Gastrocnemius medialis (tissue), 4 donors: ENCODE measurements at regions of chrX and their contacts with region 1.

Region 1: DNA sequence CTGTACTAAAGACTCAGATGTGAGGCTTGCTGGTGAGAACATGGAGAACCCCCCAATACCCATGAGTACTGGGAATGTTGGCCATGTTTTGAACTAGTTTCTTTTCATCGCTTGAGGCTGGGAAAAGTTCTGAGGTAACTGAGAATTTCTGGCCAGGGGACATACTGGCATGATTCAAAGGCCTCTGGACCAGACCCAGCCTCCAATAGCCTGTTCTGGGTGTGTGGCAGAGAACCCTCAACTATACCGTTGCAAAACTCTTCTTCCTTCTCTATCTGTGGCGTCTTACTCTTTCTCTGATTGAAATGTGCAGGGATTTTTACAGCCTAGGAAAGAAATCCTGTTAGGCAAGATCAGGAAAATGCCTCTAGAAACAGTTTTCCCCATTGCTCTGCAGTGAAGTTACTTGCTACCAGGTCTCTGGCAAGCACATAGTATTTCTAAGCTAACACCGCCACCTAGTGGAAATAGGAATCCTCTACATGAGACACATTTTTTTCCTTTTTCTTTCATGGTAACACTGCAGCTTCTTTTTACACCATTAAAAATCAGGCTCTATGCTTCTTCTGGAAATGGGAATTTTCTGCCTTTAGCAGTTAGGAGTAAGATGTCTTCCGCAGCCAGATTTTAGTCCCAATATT is 170.7 kb upstream of the ZCCHC13 start:
- DNase-seq: no peak
- ATAC-seq: peak; percentile 72 to 77
- H3K4me3 ChIP-seq: no peak overlapping the region
- H3K27ac ChIP-seq: no peak overlapping the region
- H3K4me1 ChIP-seq: no peaks in the 10 kb centered on the region
- H3K27me3 ChIP-seq: no peaks in the 10 kb centered on the region
- CTCF ChIP-seq: peak; percentile 56 to 83 (median 70)
- POLR2A ChIP-seq: no peak

Region 2: DNA sequence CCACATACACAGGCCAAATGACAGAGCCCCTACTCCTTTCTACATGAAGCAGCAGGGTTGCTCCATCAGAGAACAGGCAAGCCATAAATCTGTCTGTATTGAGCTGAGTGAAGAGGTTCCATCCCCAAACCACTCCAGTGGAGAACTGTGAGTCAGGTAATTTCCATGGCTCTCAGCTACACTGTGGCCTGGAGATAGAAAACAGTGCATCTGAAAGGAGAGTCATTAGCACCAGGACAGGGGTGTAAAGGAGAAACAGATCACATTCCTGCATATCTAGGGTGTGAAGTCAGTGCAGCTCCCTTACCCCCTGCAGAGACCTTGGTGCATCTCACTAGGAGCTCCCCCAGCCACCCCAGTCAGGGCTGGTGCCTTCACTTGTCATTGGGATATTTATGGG is 255.6 kb before region 1 on chrX:
- in situ Hi-C with region 1: loop called in 2 of 4 experiments (anchors 10 to 25 kb)
- intact Hi-C with region 1: no loop called
- DNase-seq: no peak
- ATAC-seq: no peak
- H3K4me3 ChIP-seq: no peak overlapping the region
- H3K27ac ChIP-seq: no peak overlapping the region
- H3K4me1 ChIP-seq: no peaks in the 10 kb centered on the region
- H3K27me3 ChIP-seq: no peaks in the 10 kb centered on the region
- CTCF ChIP-seq: no peak
- POLR2A ChIP-seq: no peak

Region 3: GRCh38 chrX:74343343-74344279 is 210.3 kb after region 1 on chrX:
- in situ Hi-C with region 1: no loop called
- intact Hi-C with region 1: loop called (anchors 10 kb)
- DNase-seq: peak; percentile 11 to 18
- ATAC-seq: peak in 1 of 2 donors; percentile 61
- H3K4me3 ChIP-seq: no peak overlapping the region
- H3K27ac ChIP-seq: no peak overlapping the region
- H3K4me1 ChIP-seq: no peaks in the 10 kb centered on the region
- H3K27me3 ChIP-seq: no peaks in the 10 kb centered on the region
- CTCF ChIP-seq: peak in 4 of 5 experiments; percentile 46 to 65 (median 56)
- POLR2A ChIP-seq: no peak